HCT116 (cell line): ENCODE measurements at regions of chr2 and their contacts with region 1.

Region 1: DNA sequence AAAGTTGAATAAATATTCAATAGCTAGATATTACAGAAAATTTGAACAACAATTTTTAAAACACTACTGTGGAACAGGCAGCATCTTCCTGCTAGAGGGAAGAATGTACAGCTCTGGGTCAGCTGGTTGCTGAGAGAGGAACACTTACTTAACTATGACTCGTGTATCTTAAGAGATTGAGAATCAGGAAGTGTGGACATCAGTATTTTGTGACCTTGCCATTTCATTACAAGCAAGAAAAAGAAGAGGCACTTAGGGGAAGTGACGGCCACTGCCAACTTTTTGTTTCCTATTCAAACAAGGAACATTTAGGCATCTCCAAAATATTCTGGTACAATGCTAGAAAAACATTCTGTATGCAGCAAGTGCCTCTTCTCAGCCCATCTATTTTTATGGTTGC is 45.9 kb downstream of the ITPRID2 start:
- DNase-seq: no peak
- ATAC-seq: no peak
- H3K4me3 ChIP-seq: no peak overlapping the region
- H3K27ac ChIP-seq: no peak overlapping the region
- H3K4me1 ChIP-seq: peaks cover 19 to 33% of the 10 kb centered on the region in 2 experiments
- H3K27me3 ChIP-seq: no peaks in the 10 kb centered on the region
- CTCF ChIP-seq: no peak
- POLR2A ChIP-seq: no peak
- RAD21 ChIP-seq: no peak

Region 2: DNA sequence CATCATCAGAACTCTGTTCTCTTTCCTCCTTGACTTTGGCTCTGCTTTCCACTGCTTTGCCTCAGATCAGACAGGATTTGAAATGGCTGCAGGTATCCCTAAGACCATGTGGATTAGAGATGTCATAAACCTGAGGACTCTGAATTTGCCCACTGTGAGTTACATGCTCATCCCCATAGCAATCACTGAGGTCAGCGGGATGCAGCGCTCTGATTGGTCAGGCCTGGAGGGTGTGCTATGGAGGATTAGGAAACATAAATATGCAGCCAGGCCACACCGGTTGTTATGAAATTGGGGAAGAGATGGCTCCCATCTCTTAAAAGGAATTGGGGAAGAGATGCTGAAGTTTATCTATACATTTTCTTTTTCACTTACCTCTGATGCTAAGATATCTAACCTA is 704.9 kb after region 1 on chr2:
- CTCF ChIA-PET with region 1: no interaction called
- POLR2A ChIA-PET with region 1: no interaction called
- RAD21 ChIA-PET with region 1: no interaction called
- intact Hi-C with region 1: loop called (anchors 10 kb)
- DNase-seq: peak; percentile 63
- ATAC-seq: peak; percentile 99
- H3K4me3 ChIP-seq: no peak overlapping the region
- H3K27ac ChIP-seq: no peak overlapping the region
- H3K4me1 ChIP-seq: 0 out of 4 replicates have a peak, but pooled peaks cover 0 to 5% of the 10 kb centered on the region in 2 experiments
- H3K27me3 ChIP-seq: no peaks in the 10 kb centered on the region
- CTCF ChIP-seq: no peak
- POLR2A ChIP-seq: no peak
- RAD21 ChIP-seq: no peak